ENCODE measurements at regions of chr5 and their contacts with region 1.

Region 1: DNA sequence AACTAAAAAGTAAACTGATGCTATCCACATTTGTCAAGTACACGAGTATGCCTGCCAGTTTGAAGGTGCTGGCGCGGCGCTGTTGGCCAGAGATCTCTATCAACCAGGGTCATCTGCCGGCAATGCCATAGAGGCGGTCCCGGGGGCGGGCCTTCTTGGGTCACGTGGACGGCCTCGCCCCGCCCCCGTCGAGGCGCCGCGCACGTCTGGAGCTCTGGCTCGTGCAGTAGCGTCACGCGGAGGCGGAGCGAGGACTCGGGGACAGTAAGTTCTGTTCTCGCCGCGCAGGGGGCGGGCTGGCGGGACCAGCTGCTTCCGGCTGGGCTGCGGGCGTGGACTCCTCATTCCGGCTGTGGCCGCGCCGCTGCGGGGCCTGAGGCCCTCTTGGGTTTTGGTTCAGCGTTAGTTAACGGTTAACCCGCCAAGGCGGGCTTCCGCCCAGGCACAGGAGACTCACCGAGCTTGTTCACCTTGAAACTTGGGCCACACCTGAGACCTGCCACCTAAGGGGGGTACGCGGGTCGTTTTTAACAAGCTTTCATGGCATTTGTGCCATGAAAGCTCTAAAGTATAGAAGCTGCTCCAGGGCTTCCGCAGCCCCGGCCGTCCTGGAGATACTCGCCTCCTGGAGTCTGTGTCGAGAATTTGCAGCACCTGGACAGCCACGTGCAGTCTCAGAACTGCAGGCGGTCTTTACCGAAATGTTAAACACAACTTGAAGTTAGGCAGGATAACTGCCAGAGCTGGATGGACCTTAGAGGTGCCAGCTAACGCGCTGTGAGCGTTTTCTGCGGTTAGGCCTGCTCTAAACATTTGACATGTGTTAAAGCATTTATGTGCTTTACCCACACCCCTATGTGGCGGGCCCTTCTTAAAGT is at the start of gene RFESD:
- DNase-seq: peak; percentile 99
- H3K4me3 Mint-ChIP-seq: peak within 1 kb of the TSS; percentile 83
- H3K27ac Mint-ChIP-seq: peak within 1 kb of the TSS; percentile 89
- H3K4me1 Mint-ChIP-seq: peaks cover 29% of the 10 kb centered on the region
- H3K27me3 Mint-ChIP-seq: no peaks in the 10 kb centered on the region
- total RNA-seq, gene RFESD: 4.0 and 4.2 TPM in 2 replicates

Region 2: GRCh38 chr5:95620030-95620869 is 26.5 kb before region 1 on chr5 and contains the start of gene GPR150:
- intact Hi-C with region 1: loop called (anchors 1 kb)
- DNase-seq: peak; percentile 90
- H3K4me3 Mint-ChIP-seq: peak within 1 kb of the TSS; percentile 91
- H3K27ac Mint-ChIP-seq: peak within 1 kb of the TSS; percentile 67
- H3K4me1 Mint-ChIP-seq: peaks cover 35% of the 10 kb centered on the region
- H3K27me3 Mint-ChIP-seq: peaks cover 16% of the 10 kb centered on the region
- total RNA-seq, gene GPR150: 0.33 and 0.56 TPM in 2 replicates

Region 3: DNA sequence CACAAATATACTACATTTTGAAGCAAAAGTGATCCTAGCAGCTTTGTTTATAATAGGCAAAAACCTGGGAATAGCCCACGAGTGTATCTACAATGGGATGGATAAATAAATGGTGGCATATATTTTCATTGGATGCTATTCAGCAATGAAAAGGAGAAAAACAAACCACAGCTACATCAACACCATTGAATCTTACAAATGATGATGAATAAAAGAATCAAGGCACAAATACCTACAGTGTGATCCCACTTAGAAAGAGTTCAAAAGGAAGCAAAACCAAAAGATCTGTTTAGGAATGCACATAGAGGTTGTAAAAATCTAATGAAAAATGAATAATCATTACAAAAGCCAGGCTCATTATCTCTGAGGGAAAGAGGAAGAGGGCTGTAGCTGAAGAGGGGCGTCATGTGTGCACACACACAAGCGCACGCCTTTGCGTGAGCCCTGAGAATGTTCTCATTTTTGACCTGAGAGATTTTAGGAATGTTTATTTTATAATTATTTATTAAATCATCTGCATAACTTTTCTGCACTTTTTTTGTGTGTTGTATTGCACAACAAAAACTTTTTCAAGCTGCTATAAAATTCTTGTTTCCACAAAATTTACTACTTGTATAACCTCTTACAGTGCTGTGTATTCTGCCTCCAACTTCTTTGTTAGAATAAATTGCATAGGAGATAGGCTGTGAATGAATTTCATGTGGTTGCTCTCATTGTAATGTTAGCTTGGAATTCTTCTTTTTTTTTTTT is 78.5 kb after region 1 on chr5:
- intact Hi-C with region 1: no loop called
- DNase-seq: no peak
- H3K4me3 Mint-ChIP-seq: no peak overlapping the region
- H3K27ac Mint-ChIP-seq: no peak overlapping the region
- H3K4me1 Mint-ChIP-seq: peaks cover 15% of the 10 kb centered on the region
- H3K27me3 Mint-ChIP-seq: peaks cover 48% of the 10 kb centered on the region

Region 4: DNA sequence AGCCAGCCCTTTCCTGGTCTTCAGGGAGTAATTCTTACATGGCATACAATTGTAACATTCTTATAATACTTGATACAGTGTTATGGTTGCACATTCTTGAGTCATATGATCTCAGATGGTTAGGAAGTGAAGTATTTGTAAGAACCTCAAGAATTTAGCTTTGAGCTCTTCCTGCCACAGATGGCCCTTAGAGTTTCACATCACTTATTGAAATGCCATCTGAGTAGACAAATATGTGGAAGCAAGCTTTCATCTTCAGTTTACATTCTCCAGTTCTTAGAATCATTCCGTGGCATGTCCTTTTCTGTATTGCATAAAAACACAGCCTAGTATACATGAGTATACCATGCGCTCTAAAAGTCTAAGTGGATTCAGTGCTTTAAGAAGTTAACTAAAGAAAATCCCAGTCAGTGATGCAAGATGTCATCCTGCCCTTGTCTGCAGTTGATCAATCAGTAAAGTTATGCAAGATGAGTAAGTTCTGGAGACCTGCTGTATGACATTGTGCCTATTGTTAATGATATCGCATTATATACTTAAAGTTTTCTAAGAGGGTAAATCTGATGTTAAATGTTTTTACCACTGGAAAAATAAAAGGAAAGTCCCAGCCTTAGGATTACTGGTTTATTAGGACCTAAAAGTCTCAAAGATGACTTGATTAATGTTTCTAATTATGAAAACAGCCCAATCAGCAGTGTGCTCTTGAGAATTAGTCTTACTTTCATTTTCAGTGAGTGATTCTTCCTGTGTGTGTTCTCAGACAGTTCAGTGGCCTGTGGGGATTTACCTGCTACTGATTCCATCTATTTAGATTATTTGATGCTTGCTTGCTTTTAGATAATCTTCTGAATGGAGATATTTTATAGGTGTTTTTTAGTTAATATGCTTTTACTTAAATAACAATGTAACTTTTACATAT is 113.7 kb after region 1 on chr5:
- intact Hi-C with region 1: loop called (anchors 1 kb)
- DNase-seq: no peak
- H3K4me3 Mint-ChIP-seq: peak overlapping the region; percentile 68
- H3K27ac Mint-ChIP-seq: peak overlapping the region; percentile 77
- H3K4me1 Mint-ChIP-seq: peaks cover 23% of the 10 kb centered on the region
- H3K27me3 Mint-ChIP-seq: peaks cover 42% of the 10 kb centered on the region

Region 5: GRCh38 chr5:95835682-95836385 is 189.0 kb after region 1 on chr5:
- intact Hi-C with region 1: loop called (anchors 2 kb)
- DNase-seq: no peak
- H3K4me3 Mint-ChIP-seq: peak overlapping the region; percentile 78
- H3K27ac Mint-ChIP-seq: peak overlapping the region; percentile 74
- H3K4me1 Mint-ChIP-seq: peaks cover 31% of the 10 kb centered on the region
- H3K27me3 Mint-ChIP-seq: no peaks in the 10 kb centered on the region

Region 6: GRCh38 chr5:96079075-96079474 is 432.3 kb after region 1 on chr5:
- intact Hi-C with region 1: loop called (anchors 10 kb)
- DNase-seq: no peak
- H3K4me3 Mint-ChIP-seq: peak overlapping the region; percentile 42
- H3K27ac Mint-ChIP-seq: peak overlapping the region; percentile 87
- H3K4me1 Mint-ChIP-seq: peaks cover 45% of the 10 kb centered on the region
- H3K27me3 Mint-ChIP-seq: no peaks in the 10 kb centered on the region

Region 7: DNA sequence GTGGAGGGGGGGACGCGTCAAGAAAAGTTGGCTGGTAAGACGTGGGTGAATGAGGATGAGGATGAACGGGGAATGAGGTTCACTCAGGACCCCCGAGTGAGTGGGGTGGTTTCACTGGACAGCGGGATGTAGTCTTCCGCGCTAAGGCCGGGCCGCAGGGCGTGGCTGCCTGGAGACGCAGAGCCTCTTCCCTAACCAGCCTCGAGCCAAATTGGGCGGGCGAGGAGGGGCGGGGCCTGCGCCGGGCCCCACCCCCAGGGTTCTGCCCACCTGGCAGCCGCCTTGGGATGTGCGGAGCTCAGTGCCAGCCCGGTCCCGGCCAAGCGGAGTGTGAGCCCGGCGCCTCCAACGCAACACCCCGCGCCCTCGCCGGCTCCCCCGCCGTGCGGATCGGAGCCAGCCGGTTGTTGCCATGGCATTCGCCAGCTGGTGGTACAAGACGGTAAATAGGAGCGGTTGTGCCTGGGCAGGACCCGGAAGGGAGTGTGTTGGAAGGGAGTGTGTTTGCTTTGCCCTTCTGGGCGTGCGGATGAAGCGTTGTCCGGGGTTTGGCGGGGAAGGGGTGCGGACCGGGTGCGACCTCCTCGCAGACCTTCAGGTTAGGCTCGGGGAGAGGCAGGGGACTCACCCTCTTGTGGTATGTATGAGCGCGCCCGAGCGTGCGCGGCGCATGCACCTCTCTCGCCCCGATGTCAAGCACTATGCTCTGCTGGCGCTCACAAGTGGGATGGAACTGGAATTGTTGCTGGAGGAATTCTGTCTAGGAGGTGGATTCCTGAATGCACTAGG is 1016.1 kb after region 1 on chr5:
- intact Hi-C with region 1: loop called (anchors 1 kb)
- DNase-seq: peak; percentile 96
- H3K4me3 Mint-ChIP-seq: peak overlapping the region; percentile 99
- H3K27ac Mint-ChIP-seq: peak overlapping the region; percentile 99
- H3K4me1 Mint-ChIP-seq: peaks cover 49% of the 10 kb centered on the region
- H3K27me3 Mint-ChIP-seq: peaks cover 12% of the 10 kb centered on the region